ENCODE measurements at regions of chr20 and their contacts with region 1.

Region 1: GRCh38 chr20:62861726-62862336 is at the start of gene TCFL5:
- DNase-seq: no peak
- H3K4me3 ChIP-seq: peak within 1 kb of the TSS; percentile 72
- CTCF ChIP-seq: no peak

Region 2: DNA sequence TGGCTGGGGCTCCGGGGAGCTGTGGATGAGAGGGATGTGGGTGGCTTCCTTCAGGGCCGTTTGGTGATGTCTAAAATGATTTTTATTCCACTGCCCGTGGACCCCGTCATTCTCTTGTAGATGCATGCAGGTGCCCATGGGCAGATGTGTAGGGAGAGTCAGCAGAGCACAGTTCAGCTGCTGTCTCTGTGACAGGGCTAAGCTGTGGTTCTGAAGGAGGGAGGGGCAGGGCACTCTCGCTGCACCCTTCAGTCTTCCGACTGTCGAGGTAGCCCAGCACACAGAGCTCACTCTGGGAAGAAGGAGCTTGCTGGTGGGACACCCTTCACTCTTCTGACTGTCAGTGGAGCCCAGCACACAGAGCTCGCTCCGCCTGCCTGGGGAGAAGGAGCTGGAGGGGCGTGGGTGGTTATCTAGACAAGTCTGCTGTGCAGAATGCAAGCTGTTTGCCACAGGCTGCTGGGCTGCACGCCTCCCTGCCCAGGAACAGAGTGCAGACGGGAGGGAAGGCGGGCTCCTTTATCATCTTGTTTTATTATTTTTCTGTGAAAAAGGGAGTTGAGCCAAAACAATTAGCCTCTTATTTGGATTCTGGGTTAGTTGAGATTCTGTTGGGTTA is 587.4 kb before region 1 on chr20:
- CTCF ChIA-PET with region 1: no interaction called
- POLR2A ChIA-PET with region 1: no interaction called
- DNase-seq: no peak
- H3K4me3 ChIP-seq: no peak overlapping the region
- CTCF ChIP-seq: no peak

Region 3: DNA sequence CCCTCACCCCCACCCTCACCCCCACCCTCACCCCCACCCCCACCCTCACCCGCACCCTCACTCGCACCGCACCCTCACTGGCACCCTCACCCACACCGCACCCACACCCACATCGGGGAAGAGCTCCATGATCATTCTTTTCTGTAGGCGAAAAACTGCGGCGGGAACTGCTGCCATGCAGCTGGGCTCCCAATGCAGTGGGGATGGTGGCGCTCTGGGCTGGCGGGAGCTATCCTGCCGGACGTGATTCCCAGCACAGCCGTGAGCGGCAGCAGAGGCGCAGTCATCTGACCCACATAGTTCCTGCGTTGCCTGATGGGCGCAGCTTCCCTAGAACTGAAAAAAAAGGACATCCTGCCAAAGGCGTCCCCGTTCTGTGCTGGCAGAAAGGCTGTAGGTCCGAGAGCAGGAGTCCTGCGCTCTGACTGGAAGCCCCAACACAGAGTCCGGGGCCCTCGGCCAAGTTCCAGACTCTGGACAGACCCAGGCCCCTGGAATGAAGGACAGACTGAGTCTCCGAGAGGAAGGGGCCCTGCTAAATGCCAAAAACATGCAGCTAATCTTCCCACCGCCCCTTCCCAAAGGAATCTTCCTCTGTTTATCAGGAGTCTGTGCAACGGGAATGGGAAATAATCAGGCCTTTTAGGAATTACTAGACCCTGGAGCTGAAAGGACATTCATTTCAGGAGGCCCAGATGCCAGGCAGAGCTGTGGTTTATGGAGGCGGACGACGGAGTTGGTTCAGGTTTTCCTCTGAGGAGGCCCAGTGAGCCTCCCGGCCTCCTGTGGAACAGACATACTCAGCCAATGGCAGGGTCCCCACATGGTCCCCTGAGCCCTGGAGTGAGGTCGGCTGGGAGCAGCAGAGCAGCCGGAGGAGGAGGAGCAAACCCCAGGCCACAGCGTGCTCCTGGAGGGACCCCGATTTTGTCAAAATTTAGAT is 13.9 kb after region 1 on chr20:
- CTCF ChIA-PET with region 1: interaction called, 32 read pairs
- POLR2A ChIA-PET with region 1: no interaction called
- DNase-seq: no peak
- H3K4me3 ChIP-seq: no peak overlapping the region
- CTCF ChIP-seq: peak; percentile 38

Measured in AG04449 (cell line).